Heart left ventricle (tissue), 16 donors: ENCODE measurements at regions of chr2 and their contacts with region 1.

Region 1: DNA sequence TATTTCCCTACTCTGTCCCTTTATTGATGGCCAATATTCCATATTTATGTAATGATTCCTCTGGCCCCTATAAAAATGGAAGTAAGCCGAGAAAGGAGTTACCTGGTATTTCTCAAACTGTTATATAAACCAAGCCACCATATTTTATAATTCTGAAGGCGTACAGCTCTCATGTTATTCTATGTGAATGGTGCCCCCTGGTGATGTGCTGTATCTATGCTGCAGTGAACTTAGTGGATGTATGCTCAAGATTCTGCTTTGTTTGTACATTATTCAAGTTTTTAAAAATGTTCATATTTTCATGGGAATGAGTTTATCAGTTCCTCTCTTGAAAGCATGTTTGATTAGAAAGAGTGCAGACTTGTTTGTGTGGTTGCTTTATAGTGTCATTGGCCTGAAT is 194.5 kb upstream of the LRRTM1 start:
- DNase-seq: peak in 4 of 5 donors; percentile 32 to 39 (median 38)
- ATAC-seq: peak in 3 of 4 donors; percentile 65 to 70 (median 67)
- H3K4me3 ChIP-seq: no peak overlapping the region
- H3K27ac ChIP-seq: no peak overlapping the region
- H3K4me1 ChIP-seq: no peaks in the 10 kb centered on the region
- H3K27me3 ChIP-seq: no peaks in the 10 kb centered on the region
- CTCF ChIP-seq: peak; percentile 43 to 82 (median 64)
- POLR2A ChIP-seq: no peak

Region 2: GRCh38 chr2:79935771-79936657 is 563.1 kb before region 1 on chr2:
- intact Hi-C with region 1: loop called in 2 of 10 experiments (anchors 5 to 10 kb)
- DNase-seq: peak in 3 of 5 donors; percentile 7 to 30 (median 29)
- ATAC-seq: peak; percentile 42 to 81 (median 52)
- H3K4me3 ChIP-seq: peak overlapping the region in 1 of 12 donors; percentile 7
- H3K27ac ChIP-seq: no peak overlapping the region
- H3K4me1 ChIP-seq: peaks cover 0 to 12% (median 0%) of the 10 kb centered on the region in 12 donors
- H3K27me3 ChIP-seq: no peaks in the 10 kb centered on the region
- CTCF ChIP-seq: peak; percentile 36 to 65 (median 50)
- POLR2A ChIP-seq: no peak

Region 3: DNA sequence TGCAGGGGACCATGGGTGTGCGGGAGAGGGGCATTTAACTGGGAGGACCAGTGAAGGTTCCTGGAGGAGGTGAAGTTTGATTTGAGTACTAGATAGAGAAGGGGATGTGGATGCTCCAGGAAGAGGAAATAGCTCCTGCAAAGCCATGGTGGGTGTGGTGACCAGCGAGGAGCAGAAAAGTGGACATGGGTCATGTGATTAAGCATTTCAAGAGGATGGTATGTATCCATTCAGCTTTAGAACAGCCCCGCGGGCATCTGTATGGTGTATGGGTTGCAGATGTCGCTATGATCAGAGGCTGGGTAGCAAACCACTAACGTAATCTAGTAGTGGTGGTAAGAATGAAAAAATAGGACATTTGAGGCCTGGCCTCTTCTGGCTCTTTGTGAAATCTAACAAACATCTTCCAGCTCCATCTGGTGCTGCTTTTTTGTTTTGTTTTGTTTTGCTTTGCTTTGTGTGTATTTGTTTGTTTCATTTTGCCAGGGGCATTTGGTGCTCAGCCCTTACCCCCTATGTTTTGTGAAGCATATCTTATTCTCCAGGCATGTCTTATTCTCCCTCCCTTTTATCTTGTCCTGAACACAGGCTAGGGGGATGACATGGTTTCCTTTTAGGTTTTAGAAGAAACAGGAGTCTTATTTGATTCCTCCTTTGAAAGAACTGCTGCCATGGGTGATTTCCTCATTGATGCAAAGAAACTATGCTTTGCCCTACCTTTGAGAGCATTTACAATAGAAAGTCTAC is 420.6 kb before region 1 on chr2:
- intact Hi-C with region 1: loop called in 9 of 10 experiments (anchors 2 to 10 kb)
- DNase-seq: no peak
- ATAC-seq: no peak
- H3K4me3 ChIP-seq: no peak overlapping the region
- H3K27ac ChIP-seq: no peak overlapping the region
- H3K4me1 ChIP-seq: no peaks in the 10 kb centered on the region
- H3K27me3 ChIP-seq: peaks cover 0 to 5% (median 0%) of the 10 kb centered on the region in 9 donors
- CTCF ChIP-seq: no peak
- POLR2A ChIP-seq: no peak

Region 4: DNA sequence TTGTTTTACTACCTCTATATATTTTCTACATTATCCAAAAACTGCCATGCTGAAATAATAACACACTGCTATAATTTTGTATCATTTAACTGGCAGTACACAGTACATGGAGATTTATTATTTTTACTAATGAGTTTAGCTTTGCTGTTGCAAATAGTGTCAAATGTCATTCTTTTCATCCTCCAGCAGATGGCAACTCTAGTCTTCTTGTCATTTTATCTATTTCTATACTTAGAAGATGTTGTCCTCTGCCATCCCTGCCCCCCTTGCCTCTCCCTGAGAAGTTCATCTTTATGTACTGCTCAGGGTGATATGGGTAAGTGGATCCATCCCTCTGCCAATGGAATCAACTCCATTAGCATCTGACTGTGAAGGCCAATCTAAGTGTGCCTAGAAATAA is 172.9 kb before region 1 on chr2:
- intact Hi-C with region 1: loop called (anchors 1 to 5 kb)
- DNase-seq: peak in 1 of 5 donors; percentile 37
- ATAC-seq: peak in 3 of 4 donors; percentile 50 to 60 (median 50)
- H3K4me3 ChIP-seq: no peak overlapping the region
- H3K27ac ChIP-seq: no peak overlapping the region
- H3K4me1 ChIP-seq: peaks cover 0 to 5% (median 0%) of the 10 kb centered on the region in 12 donors
- H3K27me3 ChIP-seq: peaks cover 0 to 19% (median 7%) of the 10 kb centered on the region in 9 donors
- CTCF ChIP-seq: peak in 11 of 12 donors; percentile 47 to 70 (median 61)
- POLR2A ChIP-seq: no peak